ENCODE measurements at regions of chr2 and their contacts with region 1.

Region 1: GRCh38 chr2:230160112-230160660 is 59.6 kb downstream of the SP110 start:
- DNase-seq: peak; percentile 59
- H3K4me3 Mint-ChIP-seq: no peak overlapping the region
- H3K27ac Mint-ChIP-seq: no peak overlapping the region
- H3K4me1 Mint-ChIP-seq: peaks cover 5% of the 10 kb centered on the region
- H3K27me3 Mint-ChIP-seq: no peaks in the 10 kb centered on the region

Region 2: GRCh38 chr2:230018153-230018552 is 142.0 kb before region 1 on chr2:
- CTCF ChIA-PET with region 1: no interaction called
- POLR2A ChIA-PET with region 1: no interaction called
- DNase-seq: no peak
- H3K4me3 Mint-ChIP-seq: no peak overlapping the region
- H3K27ac Mint-ChIP-seq: no peak overlapping the region
- H3K4me1 Mint-ChIP-seq: no peaks in the 10 kb centered on the region
- H3K27me3 Mint-ChIP-seq: peaks cover 5% of the 10 kb centered on the region

Region 3: DNA sequence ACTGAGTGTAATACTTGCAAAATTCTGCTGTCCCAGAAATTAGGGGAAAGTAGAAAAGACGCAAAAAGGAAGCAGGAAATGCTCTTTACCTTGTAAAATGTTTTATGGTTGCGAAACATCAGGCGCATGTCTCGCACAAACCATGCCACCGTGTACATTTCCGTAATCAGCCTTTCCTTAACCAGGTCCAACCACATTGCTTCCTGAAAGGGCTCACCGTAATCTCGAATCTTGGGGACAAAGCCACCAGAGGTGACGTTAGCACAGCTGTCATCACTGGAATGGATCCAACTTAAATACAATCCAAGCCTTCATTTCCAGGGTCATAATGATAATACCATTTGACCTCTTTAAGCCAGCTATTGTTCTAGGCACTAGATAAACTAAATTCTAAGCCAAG is 10.3 kb after region 1 on chr2:
- CTCF ChIA-PET with region 1: interaction called, 16 read pairs
- POLR2A ChIA-PET with region 1: interaction called, 3 read pairs
- DNase-seq: peak; percentile 17
- H3K4me3 Mint-ChIP-seq: no peak overlapping the region
- H3K27ac Mint-ChIP-seq: peak overlapping the region; percentile 43
- H3K4me1 Mint-ChIP-seq: peaks cover 20% of the 10 kb centered on the region
- H3K27me3 Mint-ChIP-seq: no peaks in the 10 kb centered on the region

Region 4: DNA sequence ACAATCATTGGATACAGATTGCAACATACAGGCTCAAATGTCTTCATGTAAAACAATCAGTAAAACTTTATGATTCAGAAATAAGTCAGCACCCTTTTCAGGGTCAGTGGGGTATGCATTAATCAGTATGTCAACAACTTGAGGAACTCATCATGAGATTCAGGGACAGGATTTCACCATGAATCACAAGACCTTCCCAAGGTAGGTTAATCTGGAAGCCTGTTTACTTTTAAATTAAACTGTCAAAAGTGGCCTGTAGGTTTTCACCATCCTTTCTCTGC is 360.6 kb after region 1 on chr2:
- CTCF ChIA-PET with region 1: no interaction called
- POLR2A ChIA-PET with region 1: no interaction called
- DNase-seq: no peak
- H3K4me3 Mint-ChIP-seq: no peak overlapping the region
- H3K27ac Mint-ChIP-seq: no peak overlapping the region
- H3K4me1 Mint-ChIP-seq: peaks cover 2% of the 10 kb centered on the region
- H3K27me3 Mint-ChIP-seq: no peaks in the 10 kb centered on the region

Measured in activated CD4-positive, alpha-beta T cell treated with anti-CD3 and anti-CD28 coated beads, Interleukin-2, amount 10 ng/mL, durations not matched to agents 7 days and 5 days (primary cell).